ENCODE measurements at regions of chr6 and their contacts with region 1.

Region 1: GRCh38 chr6:42745707-42746462 is at the start of gene TBCC:
- DNase-seq: peak; percentile 100
- H3K4me3 ChIP-seq: peak within 1 kb of the TSS; percentile 91 to 98 (median 95)
- H3K27ac ChIP-seq: peak within 1 kb of the TSS; percentile 97 to 99 (median 98)
- H3K4me1 ChIP-seq: peaks cover 26 to 60% (median 42%) of the 10 kb centered on the region in 4 donors
- H3K27me3 ChIP-seq: no peaks in the 10 kb centered on the region
- CTCF ChIP-seq: no peak
- EP300 ChIP-seq: no peak
- POLR2A ChIP-seq: peak; percentile 80
- total RNA-seq, gene TBCC: 33.2 to 41.9 (median 38.5) TPM

Region 2: DNA sequence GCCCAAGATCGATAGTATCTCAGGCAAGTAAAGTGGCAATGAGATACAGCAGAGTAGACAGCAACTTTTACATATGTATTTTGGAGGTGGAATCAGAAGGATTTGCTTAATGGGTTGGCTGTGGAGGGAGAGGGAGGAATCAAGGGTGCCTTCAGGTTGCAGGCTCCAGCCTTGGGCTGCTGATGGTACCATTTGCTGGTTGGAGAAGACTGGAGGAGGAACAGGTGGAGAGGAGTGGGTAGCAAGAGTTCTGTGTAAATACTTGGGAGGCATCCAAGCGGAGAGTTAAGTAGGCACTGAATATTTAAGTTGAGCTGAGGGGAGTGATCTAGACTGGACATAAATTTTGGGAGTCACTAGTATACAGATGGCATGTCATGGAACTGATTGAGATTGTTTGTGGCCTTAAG is 41.2 kb after region 1 on chr6:
- intact Hi-C with region 1: loop called (anchors 2 kb)
- DNase-seq: no peak
- H3K4me3 ChIP-seq: peak overlapping the region in 1 of 4 donors; percentile 92
- H3K27ac ChIP-seq: peak overlapping the region; percentile 45 to 100 (median 99)
- H3K4me1 ChIP-seq: peaks cover 63 to 74% (median 72%) of the 10 kb centered on the region in 4 donors
- H3K27me3 ChIP-seq: no peaks in the 10 kb centered on the region
- CTCF ChIP-seq: no peak
- EP300 ChIP-seq: no peak
- POLR2A ChIP-seq: no peak

Region 3: DNA sequence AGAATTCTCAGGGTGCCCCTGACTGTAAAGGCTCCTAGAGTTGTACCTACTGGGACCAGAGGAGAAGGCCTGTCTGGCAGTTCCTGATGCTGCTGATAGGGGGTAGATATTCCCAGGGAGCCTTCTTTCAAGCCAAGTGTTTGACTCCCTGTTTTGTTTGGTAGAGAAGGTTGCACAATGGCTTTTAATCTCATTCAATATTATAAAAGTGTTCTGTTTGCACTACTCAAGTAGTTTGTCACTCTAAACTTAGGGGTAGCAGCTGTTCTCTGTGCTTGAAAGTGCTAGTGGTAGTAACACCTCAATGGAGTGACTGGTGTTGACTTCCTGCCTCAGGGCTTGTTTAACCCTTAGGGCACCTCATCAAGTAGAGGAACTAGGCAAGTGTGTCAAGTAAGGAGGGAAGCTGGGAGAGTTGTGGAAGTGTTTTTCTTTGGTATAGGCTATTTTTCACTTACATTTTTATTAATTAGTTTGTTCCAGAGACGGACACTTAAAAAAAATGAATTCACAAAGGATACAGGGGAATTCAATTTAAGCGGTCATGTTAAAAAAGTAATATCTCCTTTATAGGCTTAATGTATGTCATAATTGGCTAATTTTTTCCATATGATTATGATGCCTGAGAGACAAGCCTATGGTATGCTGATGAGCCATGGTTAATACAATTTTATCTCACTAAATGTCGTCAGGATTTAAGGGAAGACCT is 74.1 kb after region 1 on chr6:
- intact Hi-C with region 1: loop called (anchors 10 kb)
- DNase-seq: no peak
- H3K4me3 ChIP-seq: peak overlapping the region in 1 of 4 donors; percentile 37
- H3K27ac ChIP-seq: peak overlapping the region; percentile 76 to 83 (median 79)
- H3K4me1 ChIP-seq: peaks cover 25 to 32% (median 30%) of the 10 kb centered on the region in 4 donors
- H3K27me3 ChIP-seq: no peaks in the 10 kb centered on the region
- CTCF ChIP-seq: peak in 2 of 3 experiments; percentile 7 to 51
- EP300 ChIP-seq: no peak
- POLR2A ChIP-seq: no peak

Measured in esophagus muscularis mucosa (tissue), 4 donors.